PC-3 (cell line): ENCODE measurements at regions of chr12 and their contacts with region 1.

Region 1: DNA sequence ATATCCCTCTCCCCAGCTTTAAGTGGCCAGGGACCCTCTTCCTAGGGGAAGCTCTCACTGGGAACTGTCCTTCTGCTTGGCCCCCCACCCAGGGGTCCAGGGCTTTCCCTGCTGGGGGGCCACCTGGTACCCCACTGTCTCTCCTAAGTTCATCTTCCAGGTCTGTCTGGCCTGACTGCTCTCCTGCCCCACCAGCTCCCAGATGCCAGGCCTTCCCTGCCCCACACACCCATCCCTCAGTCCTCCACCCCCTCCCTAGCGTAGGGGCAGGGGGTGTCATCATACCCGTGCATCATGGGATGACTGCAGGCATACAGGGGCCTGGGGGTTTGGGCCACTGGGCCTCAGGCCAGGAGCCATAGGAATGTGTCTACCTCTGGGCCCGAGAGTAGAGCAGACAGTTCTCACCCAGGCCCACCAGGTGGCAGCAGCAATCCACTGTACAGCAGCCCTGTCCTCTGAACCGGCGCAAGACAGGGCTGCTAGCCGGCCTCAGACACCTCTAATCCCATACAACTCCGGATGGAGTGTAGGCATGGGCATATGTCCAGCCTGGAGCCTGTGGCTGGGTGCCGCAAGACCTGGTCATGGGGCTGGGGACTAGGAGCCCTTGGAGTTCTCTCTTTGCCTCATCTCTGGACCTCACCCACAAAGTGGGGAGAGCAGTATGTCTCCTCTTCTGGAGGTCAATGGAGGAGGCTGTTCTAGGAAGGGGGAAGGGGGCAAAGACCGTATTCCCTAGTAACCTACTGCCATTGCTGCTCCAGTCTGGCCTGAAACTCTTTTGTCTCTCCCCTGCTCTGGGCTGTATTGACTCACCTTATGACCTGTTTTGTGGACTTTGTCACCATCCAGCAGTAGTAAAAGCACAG is 10.0 kb upstream of the SMARCD1 start:
- DNase-seq: peak; percentile 87
- ATAC-seq: peak; percentile 93
- H3K4me3 ChIP-seq: no peak overlapping the region
- H3K27ac ChIP-seq: no peak overlapping the region
- H3K4me1 ChIP-seq: peaks cover 6% of the 10 kb centered on the region
- H3K27me3 ChIP-seq: no peaks in the 10 kb centered on the region
- CTCF ChIP-seq: peak; percentile 92

Region 2: GRCh38 chr12:49967042-49967776 is 108.0 kb before region 1 on chr12:
- CTCF ChIA-PET with region 1: interaction called, 38 read pairs
- POLR2A ChIA-PET with region 1: no interaction called
- intact Hi-C with region 1: loop called (anchors 1 kb)
- DNase-seq: peak; percentile 82
- ATAC-seq: peak; percentile 62
- H3K4me3 ChIP-seq: peak overlapping the region; percentile 65
- H3K27ac ChIP-seq: no peak overlapping the region
- H3K4me1 ChIP-seq: peaks cover 18% of the 10 kb centered on the region
- H3K27me3 ChIP-seq: no peaks in the 10 kb centered on the region
- CTCF ChIP-seq: peak; percentile 81

Region 3: GRCh38 chr12:50111693-50112455 is 36.7 kb after region 1 on chr12 and contains the start of gene COX14:
- CTCF ChIA-PET with region 1: interaction called, 7 read pairs
- POLR2A ChIA-PET with region 1: no interaction called
- intact Hi-C with region 1: loop called (anchors 5 kb)
- DNase-seq: peak; percentile 100
- ATAC-seq: peak; percentile 92
- H3K4me3 ChIP-seq: peak within 1 kb of the TSS; percentile 95
- H3K27ac ChIP-seq: peak within 1 kb of the TSS; percentile 70
- H3K4me1 ChIP-seq: peaks cover 14% of the 10 kb centered on the region; the same call in 1 of the 2 replicates
- H3K27me3 ChIP-seq: no peaks in the 10 kb centered on the region
- CTCF ChIP-seq: peak; percentile 92
- total RNA-seq, gene COX14: 75.7 and 84.7 TPM in 2 replicates

Region 4: DNA sequence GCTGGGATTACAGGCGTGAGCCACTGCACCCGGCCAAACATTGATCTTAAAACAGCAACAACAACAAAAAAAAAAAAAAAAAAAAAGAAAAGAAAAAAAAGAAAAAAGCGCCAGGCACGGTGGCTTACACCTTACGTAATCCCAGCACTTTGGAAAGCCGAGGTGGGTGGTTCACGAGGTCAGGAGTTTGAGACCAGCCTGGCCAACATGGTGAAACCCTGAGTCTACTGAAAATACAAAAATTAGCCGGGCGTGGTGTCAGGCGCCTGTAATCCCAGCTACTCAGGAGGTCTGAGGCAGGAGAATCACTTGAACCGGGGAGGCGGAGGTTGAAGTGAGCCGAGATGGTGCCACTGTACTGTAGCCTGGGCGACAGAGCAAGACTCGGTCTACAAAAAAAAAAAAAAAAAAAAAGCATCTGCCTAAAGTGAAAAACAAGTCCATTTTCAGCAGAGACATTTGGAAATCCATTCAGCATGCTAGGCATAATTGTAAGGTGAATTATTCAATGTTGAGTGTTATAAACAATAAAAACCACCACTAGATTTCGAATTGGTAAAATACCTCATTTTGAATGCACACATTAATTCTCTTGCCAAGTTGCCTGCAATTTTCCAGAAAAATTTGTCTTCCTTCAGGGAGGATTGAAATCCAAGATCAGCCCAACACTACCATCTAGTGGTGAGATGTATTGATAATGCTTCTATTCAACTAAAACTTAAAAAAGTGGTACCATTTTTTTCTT is 100.0 kb after region 1 on chr12:
- CTCF ChIA-PET with region 1: no interaction called
- POLR2A ChIA-PET with region 1: no interaction called
- intact Hi-C with region 1: loop called (anchors 1 kb)
- DNase-seq: peak; percentile 88
- ATAC-seq: peak; percentile 38
- H3K4me3 ChIP-seq: no peak overlapping the region
- H3K27ac ChIP-seq: no peak overlapping the region
- H3K4me1 ChIP-seq: no peaks in the 10 kb centered on the region
- H3K27me3 ChIP-seq: no peaks in the 10 kb centered on the region
- CTCF ChIP-seq: peak; percentile 83

Region 5: DNA sequence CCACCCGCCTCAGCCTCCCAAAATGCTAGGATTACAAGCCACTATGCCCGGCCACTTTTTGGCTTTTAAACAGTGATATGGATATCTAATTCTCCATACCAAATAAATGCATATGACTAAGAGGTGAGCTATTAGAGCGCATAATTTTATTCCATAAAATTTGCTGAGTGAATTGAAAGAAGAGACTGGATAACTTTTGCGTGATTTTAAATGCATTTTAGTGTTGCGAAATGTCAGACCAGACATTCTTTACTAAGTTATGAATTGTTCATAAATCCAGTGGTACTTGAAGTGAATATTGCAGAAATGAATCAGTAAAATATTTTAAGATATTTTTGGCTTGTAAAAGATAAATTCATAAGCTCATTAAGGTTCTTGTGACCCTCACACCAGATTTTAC is 378.7 kb after region 1 on chr12:
- CTCF ChIA-PET with region 1: no interaction called
- POLR2A ChIA-PET with region 1: no interaction called
- intact Hi-C with region 1: no loop called
- DNase-seq: peak; percentile 54
- ATAC-seq: no peak
- H3K4me3 ChIP-seq: no peak overlapping the region
- H3K27ac ChIP-seq: no peak overlapping the region
- H3K4me1 ChIP-seq: peaks cover 11% of the 10 kb centered on the region
- H3K27me3 ChIP-seq: no peaks in the 10 kb centered on the region
- CTCF ChIP-seq: no peak